ENCODE measurements at regions of chr15 and their contacts with region 1.

Region 1: DNA sequence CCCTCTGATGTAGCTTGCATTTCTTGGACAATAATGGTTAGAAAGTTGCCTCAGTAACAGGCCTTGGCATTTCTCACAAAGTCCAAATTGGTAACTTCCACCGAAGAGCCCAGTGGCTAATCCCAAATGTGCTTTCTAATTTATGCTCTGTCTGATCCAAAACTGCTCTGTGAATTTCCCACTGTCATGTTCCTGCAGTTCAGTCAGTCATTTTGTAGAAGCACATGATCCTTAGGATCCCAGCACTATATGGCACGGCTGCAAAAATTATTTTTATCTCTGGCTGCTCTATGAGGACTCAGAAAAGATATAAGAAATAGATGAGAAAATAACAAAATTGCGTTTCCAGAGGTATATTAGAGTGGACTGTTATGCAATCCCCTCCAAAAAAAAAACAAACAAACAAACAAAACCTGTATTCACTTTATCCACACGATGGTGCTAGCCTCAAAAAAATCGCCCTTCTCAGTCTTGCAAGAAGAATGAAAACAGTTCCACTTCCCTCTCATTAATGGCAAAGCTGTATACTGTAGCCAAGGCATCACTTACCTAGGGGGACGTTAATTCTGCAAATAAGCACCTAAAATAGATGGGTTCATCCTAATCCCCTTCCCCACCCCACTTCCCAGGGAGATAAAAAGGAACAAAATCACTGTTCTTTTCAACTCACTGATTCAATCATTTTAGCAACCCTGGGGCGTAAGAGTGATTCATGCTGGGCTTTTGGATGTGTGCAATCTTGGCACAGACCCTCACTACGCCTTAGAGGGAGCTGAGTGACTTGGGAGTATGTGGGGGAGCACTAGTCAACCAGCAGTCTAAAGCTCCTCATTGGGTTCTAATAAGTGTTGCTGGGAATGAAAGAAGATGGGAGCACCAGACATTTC is 61.3 kb downstream of the TMCO5A start:
- DNase-seq: peak in 1 of 2 donors; percentile 82
- H3K4me3 ChIP-seq: no peak overlapping the region
- H3K27ac ChIP-seq: no peak overlapping the region
- H3K4me1 ChIP-seq: peaks cover 0 to 9% (median 4%) of the 10 kb centered on the region in 4 donors
- H3K27me3 ChIP-seq: no peaks in the 10 kb centered on the region
- CTCF ChIP-seq: peak in 4 of 7 experiments; percentile 52 to 81 (median 62)
- EP300 ChIP-seq: no peak
- POLR2A ChIP-seq: no peak

Region 2: DNA sequence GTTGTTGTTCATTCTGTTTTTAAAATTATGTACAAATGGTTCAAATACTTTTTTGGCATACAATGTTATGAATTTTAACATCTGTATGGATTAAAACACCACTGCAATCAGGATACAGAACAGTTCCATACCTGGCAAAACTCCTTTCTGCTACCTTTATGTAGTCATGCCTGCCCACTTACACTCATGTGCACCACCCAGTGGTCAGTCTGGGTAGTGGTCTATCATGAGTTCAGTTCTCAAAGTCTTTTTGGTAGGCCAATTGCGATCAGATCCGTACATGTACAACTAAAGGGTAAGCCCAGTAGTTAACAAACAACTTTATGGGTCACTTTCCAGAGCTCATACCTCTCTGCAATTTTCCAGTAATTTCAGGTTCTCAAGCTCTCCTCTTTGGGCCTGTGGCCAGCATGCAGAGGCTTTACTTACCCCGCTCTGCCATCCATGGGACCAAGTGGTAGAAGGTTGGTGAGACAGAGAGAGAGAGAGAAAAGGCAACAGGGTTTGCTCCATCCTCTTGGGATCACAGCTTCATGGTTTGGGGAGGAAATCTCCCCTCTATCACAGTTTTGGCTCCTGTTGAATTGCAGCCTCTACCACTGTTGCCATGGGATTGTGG is 394.3 kb after region 1 on chr15:
- intact Hi-C with region 1: loop called (anchors 5 kb)
- DNase-seq: peak; percentile 84 to 85
- H3K4me3 ChIP-seq: no peak overlapping the region
- H3K27ac ChIP-seq: no peak overlapping the region
- H3K4me1 ChIP-seq: no peaks in the 10 kb centered on the region
- H3K27me3 ChIP-seq: no peaks in the 10 kb centered on the region
- CTCF ChIP-seq: peak in 5 of 7 experiments; percentile 55 to 82 (median 71)
- EP300 ChIP-seq: no peak
- POLR2A ChIP-seq: no peak

Measured in stomach (tissue), 19 donors.